BJ (cell line): ENCODE measurements at regions of chr6 and their contacts with region 1.

Region 1: DNA sequence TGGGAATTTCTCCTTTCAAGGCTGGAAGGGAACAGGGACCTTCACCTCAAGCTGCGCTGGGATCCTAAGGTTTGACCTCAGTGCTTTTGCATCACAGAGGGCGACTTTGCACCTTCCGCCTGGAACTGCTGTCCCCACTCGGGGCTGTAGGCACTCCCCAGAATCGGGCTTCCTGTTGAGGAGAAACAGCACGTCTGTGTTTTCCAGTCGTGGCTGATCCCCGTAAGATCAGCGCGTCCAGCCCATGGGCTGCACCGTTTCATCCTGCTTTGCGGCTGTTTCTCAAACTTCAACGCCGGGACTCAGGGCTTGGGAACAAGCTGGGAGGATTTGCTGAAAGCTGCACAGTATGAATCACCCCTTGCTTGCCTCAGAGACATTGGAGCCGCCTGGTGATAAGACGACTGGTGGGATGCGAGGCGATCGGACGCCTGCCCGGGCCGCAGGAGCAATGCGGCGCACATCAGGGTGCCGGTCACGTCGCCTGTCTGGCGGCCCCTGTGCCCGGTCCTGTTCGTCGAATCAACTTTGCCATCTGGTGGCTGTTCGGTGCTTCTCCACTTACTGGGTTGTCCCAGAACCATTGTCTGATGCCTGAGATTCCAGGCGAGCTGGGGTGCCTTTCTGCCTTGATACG is 53.6 kb upstream of the FRMD1 start:
- DNase-seq: peak; percentile 9
- H3K4me3 ChIP-seq: no peak overlapping the region
- H3K27me3 ChIP-seq: no peaks in the 10 kb centered on the region
- CTCF ChIP-seq: peak; percentile 44

Region 2: DNA sequence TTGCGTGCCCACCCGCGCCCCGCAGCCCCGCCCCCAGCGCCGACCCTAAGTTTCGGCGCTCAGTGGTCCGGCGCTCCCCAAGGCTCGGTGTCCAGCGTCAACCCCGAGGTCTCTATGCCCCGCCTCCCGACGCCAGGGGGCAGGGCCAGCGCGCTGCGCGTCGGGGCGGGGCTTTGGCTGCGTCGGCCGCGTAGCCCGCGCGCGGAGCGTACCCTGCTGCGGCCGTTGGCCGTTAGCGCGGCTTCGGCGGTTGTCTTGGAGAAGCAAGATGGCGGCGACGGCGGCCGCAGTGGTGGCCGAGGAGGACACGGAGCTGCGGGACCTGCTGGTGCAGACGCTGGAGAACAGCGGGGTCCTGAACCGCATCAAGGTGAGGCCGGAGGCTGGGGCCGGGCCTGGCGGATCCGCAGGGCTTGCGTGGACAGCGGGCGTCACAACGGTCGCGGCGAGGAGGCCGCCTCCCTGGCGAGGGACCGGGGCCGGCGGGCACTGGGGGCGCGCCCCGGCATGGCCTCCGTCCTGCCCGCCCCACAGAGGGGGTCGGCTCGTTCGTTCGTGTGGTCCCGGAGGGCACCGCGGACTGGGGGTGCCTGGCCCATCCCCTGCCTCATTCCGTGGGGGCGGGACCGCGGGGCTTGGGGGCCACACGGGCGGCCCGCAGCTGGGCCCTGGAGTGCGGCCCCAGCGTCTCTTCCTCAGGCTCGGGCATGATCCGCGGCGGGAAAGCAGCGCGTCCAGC is 1133.3 kb before region 1 on chr6 and contains the start of gene CEP43:
- CTCF ChIA-PET with region 1: no interaction called
- POLR2A ChIA-PET with region 1: interaction called, 10 read pairs
- DNase-seq: peak; percentile 76
- H3K4me3 ChIP-seq: peak within 1 kb of the TSS; percentile 87
- H3K27me3 ChIP-seq: no peaks in the 10 kb centered on the region
- CTCF ChIP-seq: no peak
- polyA plus RNA-seq, gene CEP43: 5.6 and 15.5 TPM in 2 replicates

Region 3: DNA sequence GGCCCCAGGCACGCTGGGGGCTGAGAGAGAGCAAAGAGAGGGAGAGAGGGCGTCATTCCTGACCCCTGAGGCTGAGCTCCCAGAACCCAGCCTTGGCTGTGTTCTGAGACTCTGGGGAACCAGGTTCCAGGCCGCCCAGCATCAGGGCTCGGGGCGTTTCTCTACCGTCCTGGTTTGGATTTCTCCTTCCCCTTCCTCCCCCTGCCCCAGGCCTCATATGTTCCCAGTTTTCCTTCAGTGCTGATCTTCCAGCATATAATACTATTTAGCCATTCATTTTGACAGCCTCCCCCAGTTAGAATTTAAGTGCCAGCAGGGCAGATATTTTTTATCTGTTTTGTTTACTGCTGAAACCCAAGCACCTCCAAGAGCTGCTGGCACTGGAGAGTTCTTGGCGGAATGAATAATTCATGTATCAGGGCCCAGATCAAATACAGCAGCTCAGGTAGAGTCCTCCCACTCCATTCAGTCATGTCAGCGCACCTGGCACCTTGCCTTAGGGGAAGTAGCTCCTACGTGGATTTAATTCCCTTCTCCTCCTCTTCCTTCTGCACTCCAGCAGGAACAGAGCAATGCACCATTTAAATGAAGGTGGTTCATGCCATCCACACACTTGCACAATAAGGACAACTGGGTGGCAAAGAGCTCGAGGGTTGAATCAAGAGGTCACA is 30.2 kb before region 1 on chr6:
- CTCF ChIA-PET with region 1: no interaction called
- POLR2A ChIA-PET with region 1: no interaction called
- DNase-seq: no peak
- H3K4me3 ChIP-seq: no peak overlapping the region
- H3K27me3 ChIP-seq: peaks cover 14% of the 10 kb centered on the region
- CTCF ChIP-seq: no peak